ENCODE measurements at regions of chr4 and their contacts with region 1.

Region 1: GRCh38 chr4:72302981-72303704 is 265.9 kb downstream of the ADAMTS3 start:
- DNase-seq: peak in 8 of 9 donors; percentile 9 to 51 (median 32)
- ATAC-seq: peak; percentile 75
- H3K4me3 ChIP-seq: no peak overlapping the region
- H3K4me3 Mint-ChIP-seq: no peak overlapping the region
- H3K27ac ChIP-seq: no peak overlapping the region
- H3K27ac Mint-ChIP-seq: peak overlapping the region in 1 of 9 donors; percentile 0
- H3K4me1 ChIP-seq: no peaks in the 10 kb centered on the region
- H3K4me1 Mint-ChIP-seq: no peaks in the 10 kb centered on the region
- H3K27me3 ChIP-seq: no peaks in the 10 kb centered on the region
- H3K27me3 Mint-ChIP-seq: peaks cover 0 to 3% (median 0%) of the 10 kb centered on the region in 5 donors

Region 2: DNA sequence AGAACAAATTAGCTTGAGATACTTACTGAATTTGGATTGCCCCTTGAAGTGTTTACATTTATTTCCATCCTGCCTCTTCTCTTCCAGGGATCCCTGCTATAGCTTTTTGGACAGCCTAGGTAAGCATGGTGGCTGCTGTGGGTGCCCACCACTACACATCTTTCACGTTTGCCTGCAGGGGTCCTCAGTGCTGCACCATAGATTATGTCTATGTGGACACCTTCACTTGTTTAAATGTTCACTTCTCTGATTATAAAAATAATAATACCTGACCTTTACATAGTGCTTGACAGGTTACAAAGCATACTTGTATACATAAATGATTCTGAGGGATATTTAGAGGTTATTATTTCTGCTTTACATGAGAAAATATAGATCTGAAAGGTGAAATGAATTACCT is 1032.2 kb before region 1 on chr4:
- CTCF ChIA-PET with region 1: no interaction called
- POLR2A ChIA-PET with region 1: no interaction called
- intact Hi-C with region 1: loop called in 1 of 2 experiments (anchors 10 kb)
- DNase-seq: no peak
- ATAC-seq: peak; percentile 34
- H3K4me3 ChIP-seq: no peak overlapping the region
- H3K4me3 Mint-ChIP-seq: no peak overlapping the region
- H3K27ac ChIP-seq: no peak overlapping the region
- H3K27ac Mint-ChIP-seq: no peak overlapping the region
- H3K4me1 ChIP-seq: peaks cover 0 to 12% of the 10 kb centered on the region in 2 donors
- H3K4me1 Mint-ChIP-seq: peaks cover 8 to 15% (median 11%) of the 10 kb centered on the region in 7 donors
- H3K27me3 ChIP-seq: no peaks in the 10 kb centered on the region
- H3K27me3 Mint-ChIP-seq: peaks cover 0 to 4% (median 0%) of the 10 kb centered on the region in 5 donors

Region 3: DNA sequence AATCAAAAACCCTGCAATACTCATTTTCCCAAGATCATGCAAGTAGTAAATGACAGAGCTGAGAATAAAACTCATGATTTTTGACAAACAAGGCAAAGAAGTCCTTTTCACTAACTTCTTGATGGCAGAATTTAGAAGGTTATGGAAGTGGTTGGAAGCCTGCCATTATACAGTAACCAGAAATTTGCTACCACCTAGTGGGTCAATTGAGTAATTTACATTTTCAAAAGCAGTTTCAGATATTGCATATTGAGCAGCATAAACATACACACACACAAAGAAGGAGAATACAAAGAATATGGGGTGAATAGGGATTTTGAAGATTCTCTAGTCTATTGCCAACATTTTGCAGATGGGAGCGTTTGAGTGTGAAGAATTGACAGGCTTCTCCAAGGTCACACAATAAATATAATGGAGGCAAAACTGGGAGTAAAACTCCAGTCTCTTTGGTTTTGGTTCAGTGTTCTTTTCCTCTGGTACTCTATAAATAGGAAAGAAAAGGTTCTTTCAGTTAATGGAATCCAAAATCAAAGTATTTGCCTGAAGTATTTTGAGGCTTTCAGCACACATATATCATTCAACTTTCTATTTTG is 589.4 kb before region 1 on chr4:
- CTCF ChIA-PET with region 1: no interaction called
- POLR2A ChIA-PET with region 1: no interaction called
- intact Hi-C with region 1: loop called in 1 of 2 experiments (anchors 5 kb)
- DNase-seq: peak in 5 of 9 donors; percentile 7 to 33 (median 10)
- ATAC-seq: no peak
- H3K4me3 ChIP-seq: no peak overlapping the region
- H3K4me3 Mint-ChIP-seq: no peak overlapping the region
- H3K27ac ChIP-seq: no peak overlapping the region
- H3K27ac Mint-ChIP-seq: no peak overlapping the region
- H3K4me1 ChIP-seq: no peaks in the 10 kb centered on the region
- H3K4me1 Mint-ChIP-seq: no peaks in the 10 kb centered on the region
- H3K27me3 ChIP-seq: no peaks in the 10 kb centered on the region
- H3K27me3 Mint-ChIP-seq: no peaks in the 10 kb centered on the region

Region 4: DNA sequence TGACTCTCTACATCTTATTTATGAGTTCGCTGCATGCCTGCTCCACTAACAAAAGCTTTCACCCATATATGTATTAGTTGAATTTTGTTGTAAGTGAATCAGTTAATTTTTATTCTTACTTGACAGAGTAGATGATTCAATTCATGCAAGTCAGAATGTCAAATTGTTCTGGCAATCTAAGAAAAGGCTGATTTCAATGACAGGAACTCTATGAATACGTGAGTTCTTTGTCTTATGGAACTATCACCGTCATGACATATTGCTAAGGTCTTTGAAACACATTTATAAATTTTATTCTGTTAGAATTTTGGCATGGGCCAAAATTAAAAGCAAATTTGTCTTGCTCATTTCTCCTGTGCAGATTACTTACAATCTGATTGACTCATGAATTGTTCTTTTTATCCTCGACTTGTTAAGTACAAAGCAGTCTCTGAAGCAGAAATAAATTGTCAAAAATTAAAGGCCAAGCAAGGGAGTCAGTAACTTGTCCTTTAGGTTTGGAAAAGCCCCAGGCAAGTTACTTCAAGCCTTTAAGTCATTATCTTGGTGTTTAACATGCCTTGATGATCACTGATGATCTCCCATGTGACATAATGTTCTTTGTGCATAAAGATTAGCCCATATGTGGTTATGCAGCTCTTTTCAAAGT is 430.3 kb before region 1 on chr4:
- CTCF ChIA-PET with region 1: no interaction called
- POLR2A ChIA-PET with region 1: no interaction called
- intact Hi-C with region 1: no loop called
- DNase-seq: no peak
- ATAC-seq: no peak
- H3K4me3 ChIP-seq: no peak overlapping the region
- H3K4me3 Mint-ChIP-seq: no peak overlapping the region
- H3K27ac ChIP-seq: no peak overlapping the region
- H3K27ac Mint-ChIP-seq: no peak overlapping the region
- H3K4me1 ChIP-seq: no peaks in the 10 kb centered on the region
- H3K4me1 Mint-ChIP-seq: no peaks in the 10 kb centered on the region
- H3K27me3 ChIP-seq: no peaks in the 10 kb centered on the region
- H3K27me3 Mint-ChIP-seq: no peaks in the 10 kb centered on the region

Region 5: DNA sequence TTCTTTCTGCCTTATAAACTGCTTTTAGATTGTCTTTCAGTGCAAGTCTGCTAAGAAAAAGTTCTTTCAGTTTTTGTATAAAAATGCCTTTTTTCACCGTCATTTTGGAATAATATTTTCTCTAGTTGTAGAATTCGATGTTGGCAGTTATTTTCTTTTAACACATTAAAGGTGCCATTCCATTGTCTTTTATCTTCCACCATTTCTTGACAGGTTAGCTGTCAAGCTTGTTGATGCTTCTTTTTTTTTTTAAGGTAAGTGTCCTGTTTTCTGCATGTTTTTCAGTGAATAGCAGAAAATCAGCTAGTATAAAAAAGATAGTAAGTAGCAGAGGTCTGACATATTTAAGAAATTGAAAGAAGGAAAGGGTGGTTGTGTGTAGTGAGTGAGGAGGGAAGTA is 389.9 kb before region 1 on chr4:
- CTCF ChIA-PET with region 1: no interaction called
- POLR2A ChIA-PET with region 1: no interaction called
- intact Hi-C with region 1: no loop called
- DNase-seq: no peak
- ATAC-seq: no peak
- H3K4me3 ChIP-seq: no peak overlapping the region
- H3K4me3 Mint-ChIP-seq: no peak overlapping the region
- H3K27ac ChIP-seq: no peak overlapping the region
- H3K27ac Mint-ChIP-seq: no peak overlapping the region
- H3K4me1 ChIP-seq: no peaks in the 10 kb centered on the region
- H3K4me1 Mint-ChIP-seq: no peaks in the 10 kb centered on the region
- H3K27me3 ChIP-seq: no peaks in the 10 kb centered on the region
- H3K27me3 Mint-ChIP-seq: no peaks in the 10 kb centered on the region

Measured in naive thymus-derived CD4-positive, alpha-beta T cell (primary cell).